ENCODE measurements at regions of chr6 and their contacts with region 1.

Region 1: DNA sequence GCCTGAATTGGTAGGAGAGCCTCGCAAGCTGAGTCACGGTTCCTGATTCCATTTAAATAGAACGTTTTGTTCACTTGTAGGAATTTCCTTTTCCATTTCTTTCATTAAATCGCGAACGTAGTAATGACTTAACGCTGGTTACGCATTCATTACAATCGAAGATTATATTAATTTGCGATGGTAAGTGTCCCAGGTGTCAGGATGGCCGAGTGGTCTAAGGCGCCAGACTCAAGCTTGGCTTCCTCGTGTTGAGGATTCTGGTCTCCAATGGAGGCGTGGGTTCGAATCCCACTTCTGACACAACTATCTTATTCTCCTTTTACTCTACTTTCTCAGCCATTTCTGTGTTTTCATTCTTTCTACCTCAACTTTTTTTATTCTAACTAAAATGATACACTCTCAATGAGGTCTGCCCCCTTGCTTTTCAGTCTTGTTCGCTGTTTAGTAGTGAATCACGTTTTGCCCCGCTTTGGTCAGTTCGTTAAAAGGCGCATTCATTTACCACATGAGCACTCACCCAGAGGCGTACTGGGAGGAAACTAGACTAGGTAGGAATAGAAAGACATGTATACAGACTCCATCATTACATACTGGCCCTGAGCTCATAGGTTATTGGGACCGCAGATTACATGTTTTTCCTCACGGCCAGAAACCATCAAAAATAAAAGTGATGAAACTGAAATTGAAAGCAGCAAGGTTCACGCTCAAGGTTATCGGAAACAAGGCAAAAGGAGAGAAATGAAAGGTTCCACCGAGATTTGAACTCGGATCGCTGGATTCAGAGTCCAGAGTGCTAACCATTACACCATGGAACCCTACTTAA is 17.3 kb upstream of the TRIM27 start:
- DNase-seq: peak in 1 of 2 donors; percentile 89
- H3K4me3 ChIP-seq: peak overlapping the region; percentile 53 to 62
- H3K27ac ChIP-seq: peak overlapping the region; percentile 88
- H3K4me1 ChIP-seq: peaks cover 19% of the 10 kb centered on the region
- H3K27me3 ChIP-seq: no peaks in the 10 kb centered on the region
- CTCF ChIP-seq: no peak
- POLR2A ChIP-seq: no peak

Region 2: GRCh38 chr6:28896505-28897368 is 44.3 kb before region 1 on chr6:
- intact Hi-C with region 1: loop called (anchors 1 kb)
- DNase-seq: peak in 1 of 2 donors; percentile 92
- H3K4me3 ChIP-seq: peak overlapping the region; percentile 69 to 86
- H3K27ac ChIP-seq: peak overlapping the region; percentile 98
- H3K4me1 ChIP-seq: no peaks in the 10 kb centered on the region
- H3K27me3 ChIP-seq: no peaks in the 10 kb centered on the region
- CTCF ChIP-seq: peak in 1 of 3 experiments; percentile 27
- POLR2A ChIP-seq: peak in 1 of 2 donors; percentile 15